Activated naive CD4-positive, alpha-beta T cell treated with anti-CD3 and anti-CD28 coated beads for 36 hours (primary cell): ENCODE measurements at regions of chr16 and their contacts with region 1.

Region 1: GRCh38 chr16:28879841-28880588 is 1.7 kb downstream of the ATP2A1 start:
- DNase-seq: peak; percentile 95
- H3K4me3 Mint-ChIP-seq: peak overlapping the region; percentile 90
- H3K27ac Mint-ChIP-seq: peak overlapping the region; percentile 24
- H3K4me1 Mint-ChIP-seq: peaks cover 20% of the 10 kb centered on the region
- H3K27me3 Mint-ChIP-seq: peaks cover 13% of the 10 kb centered on the region

Region 2: GRCh38 chr16:28846080-28846932 is 33.7 kb before region 1 on chr16 and contains the start of gene TUFM:
- CTCF ChIA-PET with region 1: no interaction called
- intact Hi-C with region 1: loop called (anchors 2 kb)
- DNase-seq: peak; percentile 98
- H3K4me3 Mint-ChIP-seq: peak within 1 kb of the TSS; percentile 98
- H3K27ac Mint-ChIP-seq: peak within 1 kb of the TSS; percentile 96
- H3K4me1 Mint-ChIP-seq: peaks cover 28% of the 10 kb centered on the region
- H3K27me3 Mint-ChIP-seq: no peaks in the 10 kb centered on the region
- total RNA-seq, gene TUFM: 276 to 289 TPM